PC-3 (cell line): ENCODE measurements at regions of chr6 and their contacts with region 1.

Region 1: GRCh38 chr6:32933636-32934085 is 7.2 kb downstream of the HLA-DMB start:
- DNase-seq: peak; percentile 80
- ATAC-seq: peak; percentile 71
- H3K4me3 ChIP-seq: no peak overlapping the region
- H3K27ac ChIP-seq: no peak overlapping the region
- H3K4me1 ChIP-seq: no peaks in the 10 kb centered on the region
- H3K27me3 ChIP-seq: peaks cover 44% of the 10 kb centered on the region
- CTCF ChIP-seq: peak; percentile 92

Region 2: DNA sequence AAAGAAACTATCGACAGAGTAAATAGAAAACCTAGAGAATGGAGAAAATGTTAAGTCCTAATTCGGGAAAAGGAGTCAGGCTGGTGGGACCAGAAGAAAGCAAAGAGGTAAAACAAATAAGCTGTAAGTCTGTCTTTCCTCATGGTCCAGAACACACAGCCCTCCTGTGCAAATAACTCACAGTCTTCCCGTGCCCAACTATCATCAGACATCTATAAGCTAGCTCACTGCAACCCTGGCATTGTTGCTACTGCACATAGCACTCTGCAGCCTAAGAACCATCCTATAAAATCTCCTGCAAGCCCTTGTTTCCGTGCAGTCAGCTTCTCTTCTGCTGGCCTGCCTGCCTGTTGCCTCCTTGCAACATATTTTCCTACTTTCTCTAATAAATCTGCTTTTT is 476.6 kb before region 1 on chr6:
- CTCF ChIA-PET with region 1: no interaction called
- POLR2A ChIA-PET with region 1: no interaction called
- intact Hi-C with region 1: no loop called
- DNase-seq: no peak
- ATAC-seq: no peak
- H3K4me3 ChIP-seq: no peak overlapping the region
- H3K27ac ChIP-seq: no peak overlapping the region
- H3K4me1 ChIP-seq: no peaks in the 10 kb centered on the region
- H3K27me3 ChIP-seq: peaks cover 37% of the 10 kb centered on the region
- CTCF ChIP-seq: no peak

Region 3: GRCh38 chr6:32947552-32948465 is 14.1 kb after region 1 on chr6:
- CTCF ChIA-PET with region 1: interaction called, 10 read pairs
- POLR2A ChIA-PET with region 1: no interaction called
- intact Hi-C with region 1: loop called (anchors 2 kb)
- DNase-seq: peak; percentile 75
- ATAC-seq: peak; percentile 90
- H3K4me3 ChIP-seq: no peak overlapping the region
- H3K27ac ChIP-seq: no peak overlapping the region
- H3K4me1 ChIP-seq: no peaks in the 10 kb centered on the region; the same call in 1 of the 2 replicates
- H3K27me3 ChIP-seq: no peaks in the 10 kb centered on the region
- CTCF ChIP-seq: peak; percentile 82

Region 4: DNA sequence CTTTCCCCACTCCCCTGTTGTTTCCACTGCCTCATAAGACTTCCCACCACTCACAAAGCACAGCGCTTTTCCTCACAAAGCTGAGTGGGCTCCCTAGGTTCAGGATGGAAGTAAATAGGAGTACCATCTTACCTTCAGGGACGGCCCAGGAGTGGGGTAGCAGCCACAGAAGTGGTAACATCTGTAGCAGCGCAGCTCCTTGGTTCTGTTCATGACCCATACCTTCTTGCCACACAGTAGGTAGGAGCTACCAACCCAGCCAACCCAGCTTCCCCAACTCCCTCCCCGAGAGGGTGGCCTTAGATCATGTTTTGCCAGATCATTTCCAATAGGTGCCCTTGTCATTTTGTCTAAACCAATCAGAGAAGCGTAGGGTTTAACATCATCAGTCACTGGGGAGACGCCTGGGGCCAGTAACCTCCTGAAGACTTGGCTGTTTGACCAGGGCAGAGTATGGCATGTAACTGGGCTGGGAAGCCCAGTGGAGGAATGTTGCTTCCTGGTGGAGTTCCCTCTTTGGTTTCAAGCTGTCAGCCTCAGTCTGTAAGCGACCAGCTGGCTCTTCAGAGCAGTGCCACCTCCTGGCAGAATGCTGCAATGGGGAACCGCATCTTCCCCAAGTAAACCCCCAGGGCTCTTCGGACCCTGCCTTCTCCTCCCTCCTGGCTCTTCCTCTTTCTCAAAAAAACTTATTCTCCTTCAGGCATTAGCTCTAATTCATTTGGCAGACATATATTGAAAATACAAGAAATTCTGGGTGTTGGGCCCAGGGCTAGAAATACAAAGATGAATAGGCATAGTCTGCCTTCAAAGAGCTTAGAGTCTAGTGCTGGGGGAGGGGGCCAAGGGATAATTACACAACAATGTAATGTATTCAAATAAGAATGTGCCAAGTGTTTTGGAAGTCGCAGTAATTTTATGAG is 19.4 kb after region 1 on chr6 and contains the start of gene HLA-DMA:
- CTCF ChIA-PET with region 1: interaction called, 10 read pairs
- POLR2A ChIA-PET with region 1: no interaction called
- intact Hi-C with region 1: no loop called
- DNase-seq: peak; percentile 96
- ATAC-seq: peak; percentile 97
- H3K4me3 ChIP-seq: no peak within 1 kb of the TSS
- H3K27ac ChIP-seq: no peak within 1 kb of the TSS
- H3K4me1 ChIP-seq: no peaks in the 10 kb centered on the region; the same call in 1 of the 2 replicates
- H3K27me3 ChIP-seq: no peaks in the 10 kb centered on the region
- CTCF ChIP-seq: peak; percentile 79
- total RNA-seq, gene HLA-DMA: 1.7 and 3.0 TPM in 2 replicates

Region 5: GRCh38 chr6:32984605-32985389 is 51.1 kb after region 1 on chr6:
- CTCF ChIA-PET with region 1: interaction called, 74 read pairs
- POLR2A ChIA-PET with region 1: interaction called, 5 read pairs
- intact Hi-C with region 1: loop called (anchors 1 kb)
- DNase-seq: peak; percentile 95
- ATAC-seq: peak; percentile 95
- H3K4me3 ChIP-seq: no peak overlapping the region
- H3K27ac ChIP-seq: no peak overlapping the region
- H3K4me1 ChIP-seq: peaks cover 8% of the 10 kb centered on the region; the same call in 1 of the 2 replicates
- H3K27me3 ChIP-seq: no peaks in the 10 kb centered on the region
- CTCF ChIP-seq: peak; percentile 94

Region 6: DNA sequence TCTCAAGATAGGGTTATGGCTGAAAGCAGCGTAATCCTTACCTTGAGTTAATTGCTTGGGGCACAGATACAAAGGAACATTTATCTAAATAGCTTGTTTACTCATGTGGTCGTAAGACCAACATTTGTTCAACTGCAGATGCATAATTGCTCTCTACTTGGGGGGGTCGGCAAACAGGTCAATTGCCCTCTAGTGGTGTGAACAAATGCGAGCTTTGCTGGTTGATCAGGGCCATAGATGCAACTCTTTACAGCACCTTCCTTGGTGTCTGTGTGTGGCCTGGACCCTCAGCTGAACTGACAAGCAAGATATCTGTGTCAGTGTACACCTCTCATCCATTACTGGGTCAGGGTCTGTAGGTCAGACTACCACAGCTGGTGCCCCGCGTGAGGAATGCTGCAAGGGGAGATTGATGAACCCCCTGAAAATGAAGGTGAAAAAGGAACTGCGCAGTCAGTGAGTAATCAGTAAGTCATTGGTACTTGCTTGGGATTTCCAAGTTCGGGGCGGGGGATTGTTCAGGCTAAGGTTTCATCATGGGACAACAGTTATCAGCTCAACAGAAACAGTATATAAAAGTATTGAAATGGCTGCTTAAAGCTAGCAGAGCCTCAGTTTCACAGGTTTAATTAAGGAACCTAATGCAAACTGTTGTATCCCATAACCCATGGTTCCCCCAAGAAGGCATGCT is 115.8 kb after region 1 on chr6:
- CTCF ChIA-PET with region 1: no interaction called
- POLR2A ChIA-PET with region 1: no interaction called
- intact Hi-C with region 1: no loop called
- DNase-seq: no peak
- ATAC-seq: no peak
- H3K4me3 ChIP-seq: no peak overlapping the region
- H3K27ac ChIP-seq: no peak overlapping the region
- H3K4me1 ChIP-seq: no peaks in the 10 kb centered on the region
- H3K27me3 ChIP-seq: peaks cover 55% of the 10 kb centered on the region
- CTCF ChIP-seq: peak; percentile 53

Region 7: GRCh38 chr6:33061987-33062386 is 128.3 kb after region 1 on chr6:
- CTCF ChIA-PET with region 1: no interaction called
- POLR2A ChIA-PET with region 1: no interaction called
- intact Hi-C with region 1: no loop called
- DNase-seq: peak; percentile 24
- ATAC-seq: no peak
- H3K4me3 ChIP-seq: no peak overlapping the region
- H3K27ac ChIP-seq: no peak overlapping the region
- H3K4me1 ChIP-seq: no peaks in the 10 kb centered on the region
- H3K27me3 ChIP-seq: peaks cover 51% of the 10 kb centered on the region
- CTCF ChIP-seq: no peak